CD8-positive, alpha-beta T cell (primary cell): ENCODE measurements at regions of chr3 and their contacts with region 1.

Region 1: GRCh38 chr3:172856766-172857742 is 106.5 kb downstream of the ECT2 start:
- DNase-seq: no peak
- ATAC-seq: no peak
- H3K4me3 ChIP-seq: no peak overlapping the region
- H3K4me3 Mint-ChIP-seq: no peak overlapping the region
- H3K27ac ChIP-seq: no peak overlapping the region
- H3K27ac Mint-ChIP-seq: no peak overlapping the region
- H3K4me1 ChIP-seq: no peaks in the 10 kb centered on the region
- H3K4me1 Mint-ChIP-seq: no peaks in the 10 kb centered on the region
- H3K27me3 ChIP-seq: no peaks in the 10 kb centered on the region
- H3K27me3 Mint-ChIP-seq: peaks cover 2% of the 10 kb centered on the region
- CTCF ChIP-seq: no peak

Region 2: GRCh38 chr3:173055228-173055933 is 198.3 kb after region 1 on chr3:
- CTCF ChIA-PET with region 1: no interaction called
- POLR2A ChIA-PET with region 1: no interaction called
- intact Hi-C with region 1: no loop called
- DNase-seq: no peak
- ATAC-seq: no peak
- H3K4me3 ChIP-seq: no peak overlapping the region
- H3K4me3 Mint-ChIP-seq: no peak overlapping the region
- H3K27ac ChIP-seq: no peak overlapping the region
- H3K27ac Mint-ChIP-seq: no peak overlapping the region
- H3K4me1 ChIP-seq: no peaks in the 10 kb centered on the region
- H3K4me1 Mint-ChIP-seq: no peaks in the 10 kb centered on the region
- H3K27me3 ChIP-seq: no peaks in the 10 kb centered on the region
- H3K27me3 Mint-ChIP-seq: no peaks in the 10 kb centered on the region
- CTCF ChIP-seq: no peak

Region 3: GRCh38 chr3:173785004-173785403 is 928.0 kb after region 1 on chr3:
- CTCF ChIA-PET with region 1: no interaction called
- POLR2A ChIA-PET with region 1: interaction called, 10 read pairs
- intact Hi-C with region 1: no loop called
- DNase-seq: no peak
- ATAC-seq: no peak
- H3K4me3 ChIP-seq: no peak overlapping the region
- H3K4me3 Mint-ChIP-seq: no peak overlapping the region
- H3K27ac ChIP-seq: no peak overlapping the region
- H3K27ac Mint-ChIP-seq: no peak overlapping the region
- H3K4me1 ChIP-seq: no peaks in the 10 kb centered on the region
- H3K4me1 Mint-ChIP-seq: no peaks in the 10 kb centered on the region
- H3K27me3 ChIP-seq: no peaks in the 10 kb centered on the region
- H3K27me3 Mint-ChIP-seq: no peaks in the 10 kb centered on the region
- CTCF ChIP-seq: no peak